ENCODE measurements at regions of chr3 and their contacts with region 1.

Region 1: GRCh38 chr3:111012388-111013248 is 59.0 kb upstream of the NECTIN3 start:
- DNase-seq: peak; percentile 39
- ATAC-seq: peak; percentile 100
- H3K4me3 ChIP-seq: no peak overlapping the region
- H3K27ac ChIP-seq: no peak overlapping the region
- H3K4me1 ChIP-seq: 0 out of 4 replicates have a peak, but pooled peaks cover 0 to 6% of the 10 kb centered on the region in 2 experiments
- H3K27me3 ChIP-seq: no peaks in the 10 kb centered on the region
- CTCF ChIP-seq: peak; percentile 39 to 58 (median 49); a peak in 5 of 6 replicates
- POLR2A ChIP-seq: no peak
- RAD21 ChIP-seq: peak; percentile 79

Region 2: DNA sequence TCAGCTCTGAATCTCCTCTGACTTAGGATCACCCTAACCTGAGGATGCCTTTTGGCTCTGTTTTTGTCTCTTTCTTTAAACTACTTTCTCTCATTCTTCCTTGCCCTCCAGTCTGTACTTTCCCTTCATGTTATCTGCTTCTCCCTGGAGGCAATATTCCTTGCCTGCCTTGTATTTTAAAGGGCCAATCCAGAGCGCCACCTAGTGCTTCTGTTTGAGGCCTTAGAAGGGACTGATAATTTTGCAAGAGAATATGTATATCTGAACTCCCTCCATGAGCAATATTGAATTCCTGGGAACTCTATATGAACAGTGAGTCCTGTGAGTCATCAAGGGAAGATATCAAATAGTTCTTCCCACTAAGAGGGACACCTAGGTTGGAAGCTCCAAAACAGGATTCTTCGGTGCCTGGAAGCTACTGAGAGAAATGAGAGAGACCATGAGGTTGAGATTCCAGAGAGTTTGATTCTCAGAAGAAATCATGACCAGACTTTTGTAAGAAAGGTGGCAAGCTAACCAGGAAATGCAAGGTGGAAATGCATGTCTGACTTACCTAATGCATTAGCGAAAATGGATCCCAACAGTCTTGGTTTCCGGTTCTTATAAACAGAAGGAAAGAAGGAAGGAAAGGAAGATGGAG is 325.6 kb after region 1 on chr3:
- CTCF ChIA-PET with region 1: no interaction called
- POLR2A ChIA-PET with region 1: no interaction called
- RAD21 ChIA-PET with region 1: no interaction called
- intact Hi-C with region 1: loop called (anchors 2 kb)
- DNase-seq: peak; percentile 66
- ATAC-seq: peak; percentile 95
- H3K4me3 ChIP-seq: no peak overlapping the region
- H3K27ac ChIP-seq: no peak overlapping the region
- H3K4me1 ChIP-seq: peaks cover 0 to 18% of the 10 kb centered on the region in 2 experiments; a peak in 2 of 4 replicates
- H3K27me3 ChIP-seq: no peaks in the 10 kb centered on the region
- CTCF ChIP-seq: peak; percentile 72 to 92 (median 83); a peak in 5 of 6 replicates
- POLR2A ChIP-seq: no peak
- RAD21 ChIP-seq: peak; percentile 92

Region 3: GRCh38 chr3:111521891-111522290 is 509.3 kb after region 1 on chr3:
- CTCF ChIA-PET with region 1: no interaction called
- POLR2A ChIA-PET with region 1: no interaction called
- RAD21 ChIA-PET with region 1: no interaction called
- intact Hi-C with region 1: loop called (anchors 5 kb)
- DNase-seq: no peak
- ATAC-seq: no peak
- H3K4me3 ChIP-seq: no peak overlapping the region
- H3K27ac ChIP-seq: no peak overlapping the region
- H3K4me1 ChIP-seq: no peaks in the 10 kb centered on the region
- H3K27me3 ChIP-seq: no peaks in the 10 kb centered on the region
- CTCF ChIP-seq: no peak
- POLR2A ChIP-seq: no peak
- RAD21 ChIP-seq: no peak

Measured in HCT116 (cell line).